ENCODE measurements at regions of chr2 and their contacts with region 1.

Region 1: DNA sequence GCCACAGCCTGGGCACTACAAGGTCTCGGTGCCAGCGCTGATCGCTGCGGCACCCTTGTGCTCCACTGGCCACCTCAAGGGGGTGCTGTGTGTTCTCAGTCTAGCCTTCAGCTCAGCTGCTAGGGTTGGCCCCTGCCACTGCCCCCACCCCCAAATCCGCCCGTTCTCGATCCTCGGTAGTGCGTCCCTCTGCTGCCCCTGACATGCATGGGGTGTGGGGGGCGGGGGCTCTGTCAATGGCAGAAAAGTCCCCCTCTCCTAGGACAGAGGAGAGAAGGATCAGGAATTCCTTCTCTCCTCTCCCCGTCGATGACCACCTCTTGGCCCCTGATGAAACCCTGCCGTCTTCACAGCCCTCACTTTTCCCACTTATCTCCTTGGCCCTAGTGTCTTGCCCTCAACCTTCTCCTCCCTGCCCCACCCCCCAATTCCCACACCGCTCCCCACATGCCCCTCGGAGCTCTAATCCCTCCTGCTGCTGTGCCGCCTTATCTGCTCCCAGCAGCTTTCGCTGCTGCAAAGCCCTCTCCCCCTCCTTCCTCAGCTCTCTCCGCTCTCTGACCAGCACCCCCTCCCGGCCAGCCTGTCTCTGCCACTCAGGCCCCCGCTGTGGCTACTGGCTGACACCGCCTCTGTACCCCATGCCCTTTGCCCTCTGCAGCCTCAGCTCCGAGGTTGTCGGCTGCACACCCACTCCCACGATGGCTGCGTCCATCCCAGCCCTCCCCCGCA is 4.3 kb upstream of the ASIC4 start:
- DNase-seq: peak; percentile 77
- ATAC-seq: peak; percentile 91
- H3K4me3 Mint-ChIP-seq: no peak overlapping the region
- H3K27ac Mint-ChIP-seq: no peak overlapping the region
- H3K4me1 Mint-ChIP-seq: peaks cover 20% of the 10 kb centered on the region
- H3K27me3 Mint-ChIP-seq: peaks cover 44% of the 10 kb centered on the region

Region 2: GRCh38 chr2:218010140-218010983 is 1499.6 kb before region 1 on chr2:
- CTCF ChIA-PET with region 1: no interaction called
- POLR2A ChIA-PET with region 1: no interaction called
- intact Hi-C with region 1: loop called in 1 of 2 experiments (anchors 10 kb)
- DNase-seq: peak; percentile 48
- ATAC-seq: peak; percentile 78
- H3K4me3 Mint-ChIP-seq: peak overlapping the region; percentile 50
- H3K27ac Mint-ChIP-seq: no peak overlapping the region
- H3K4me1 Mint-ChIP-seq: peaks cover 10% of the 10 kb centered on the region
- H3K27me3 Mint-ChIP-seq: peaks cover 34% of the 10 kb centered on the region

Region 3: DNA sequence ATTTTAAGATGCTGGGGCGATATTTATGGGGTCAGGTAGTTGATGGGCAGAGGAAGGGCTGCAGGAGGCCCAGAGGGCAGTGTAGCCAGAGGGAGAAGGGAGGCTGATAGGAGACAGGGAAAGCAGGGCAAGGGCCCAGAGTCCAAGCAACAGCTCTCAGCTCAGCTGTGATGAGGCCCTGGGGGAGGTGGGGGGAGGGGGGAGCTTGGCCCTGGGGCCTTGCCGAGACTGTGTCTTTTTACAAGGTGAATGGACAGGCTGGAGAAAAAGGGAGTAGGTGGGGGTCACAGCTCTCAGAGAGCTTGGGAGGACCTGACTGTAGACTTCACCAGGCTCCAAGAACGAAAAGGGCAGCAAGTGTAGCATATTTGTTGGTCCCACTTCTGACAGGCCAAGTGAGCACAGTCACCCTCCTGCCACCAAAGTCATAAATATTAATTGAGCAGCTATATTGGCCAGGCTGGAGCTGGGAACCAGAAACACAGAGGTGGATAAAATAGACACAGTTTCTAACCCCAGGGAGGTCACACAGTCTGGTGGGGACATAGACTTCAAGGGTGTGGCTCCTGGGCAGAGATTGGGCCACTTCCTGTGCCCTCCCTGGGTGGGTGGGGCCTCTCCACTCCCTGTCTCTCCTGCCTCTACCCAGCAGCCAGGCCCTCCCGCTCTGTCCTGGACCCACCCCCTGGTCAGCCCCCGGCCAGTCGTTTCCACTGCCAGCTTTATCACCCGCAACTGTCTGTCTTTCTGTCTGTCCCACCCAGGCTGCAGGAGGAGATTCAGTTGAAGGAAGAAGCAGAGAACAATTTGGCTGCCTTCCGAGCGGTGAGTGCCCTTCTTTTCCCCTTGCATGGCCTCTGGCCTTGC is 90.4 kb before region 1 on chr2:
- CTCF ChIA-PET with region 1: no interaction called
- POLR2A ChIA-PET with region 1: no interaction called
- intact Hi-C with region 1: no loop called
- DNase-seq: no peak
- ATAC-seq: no peak
- H3K4me3 Mint-ChIP-seq: no peak overlapping the region
- H3K27ac Mint-ChIP-seq: no peak overlapping the region
- H3K4me1 Mint-ChIP-seq: no peaks in the 10 kb centered on the region
- H3K27me3 Mint-ChIP-seq: peaks cover 17% of the 10 kb centered on the region

Region 4: DNA sequence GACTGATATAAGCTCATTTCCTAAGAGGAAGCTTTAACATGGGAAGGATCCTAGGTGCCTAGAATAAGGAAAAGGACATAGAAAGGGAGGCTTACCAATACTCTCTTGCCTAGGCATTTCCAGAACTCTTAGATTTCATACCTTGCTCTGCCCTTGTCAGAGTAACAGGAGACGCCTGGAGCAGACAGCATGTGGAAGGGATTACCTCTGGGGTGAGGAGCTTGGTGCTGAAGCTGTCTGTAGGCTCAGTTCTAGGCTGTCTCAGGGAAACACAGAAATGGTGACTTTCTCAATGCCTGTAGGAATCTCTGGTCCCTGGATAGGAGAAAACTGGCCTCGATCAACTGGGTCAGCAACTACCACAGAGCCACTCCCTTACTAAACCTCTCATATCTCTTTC is 267.4 kb after region 1 on chr2:
- CTCF ChIA-PET with region 1: no interaction called
- POLR2A ChIA-PET with region 1: no interaction called
- intact Hi-C with region 1: no loop called
- DNase-seq: no peak
- ATAC-seq: no peak
- H3K4me3 Mint-ChIP-seq: no peak overlapping the region
- H3K27ac Mint-ChIP-seq: no peak overlapping the region
- H3K4me1 Mint-ChIP-seq: no peaks in the 10 kb centered on the region
- H3K27me3 Mint-ChIP-seq: peaks cover 7% of the 10 kb centered on the region